ENCODE measurements at regions of chr18 and their contacts with region 1.

Region 1: DNA sequence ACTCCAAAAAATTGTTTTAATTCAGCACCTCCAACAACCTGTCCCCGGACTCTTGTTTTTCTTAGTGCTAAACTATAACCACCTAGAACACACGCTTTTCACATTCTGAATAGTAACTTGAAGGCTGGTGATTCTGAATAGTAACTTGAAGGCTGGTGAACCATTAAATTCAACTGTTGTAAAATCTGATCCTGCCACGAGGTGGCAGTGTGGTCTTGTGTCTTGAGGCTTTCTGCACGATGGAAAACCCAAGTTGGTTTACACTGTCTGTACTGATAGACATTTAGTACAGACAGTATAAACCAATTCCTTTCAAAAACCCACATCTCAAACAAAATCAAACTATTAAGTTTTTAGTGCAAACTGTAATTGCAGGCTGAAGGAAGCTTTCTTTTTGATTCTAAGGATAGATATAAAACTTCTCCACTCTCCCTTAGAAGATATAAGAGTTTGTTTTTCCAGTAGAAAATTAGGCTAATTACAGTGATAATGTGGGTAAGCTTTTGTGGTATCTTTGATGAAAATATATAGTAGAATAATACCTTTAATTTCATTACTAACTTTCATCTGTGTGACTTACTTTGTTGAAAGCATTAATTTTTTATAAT is 57.6 kb downstream of the VAPA start:
- DNase-seq: no peak
- H3K4me3 ChIP-seq: no peak overlapping the region
- H3K27ac ChIP-seq: no peak overlapping the region
- H3K4me1 ChIP-seq: no peaks in the 10 kb centered on the region
- H3K27me3 ChIP-seq: no peaks in the 10 kb centered on the region
- CTCF ChIP-seq: peak; percentile 85

Region 2: DNA sequence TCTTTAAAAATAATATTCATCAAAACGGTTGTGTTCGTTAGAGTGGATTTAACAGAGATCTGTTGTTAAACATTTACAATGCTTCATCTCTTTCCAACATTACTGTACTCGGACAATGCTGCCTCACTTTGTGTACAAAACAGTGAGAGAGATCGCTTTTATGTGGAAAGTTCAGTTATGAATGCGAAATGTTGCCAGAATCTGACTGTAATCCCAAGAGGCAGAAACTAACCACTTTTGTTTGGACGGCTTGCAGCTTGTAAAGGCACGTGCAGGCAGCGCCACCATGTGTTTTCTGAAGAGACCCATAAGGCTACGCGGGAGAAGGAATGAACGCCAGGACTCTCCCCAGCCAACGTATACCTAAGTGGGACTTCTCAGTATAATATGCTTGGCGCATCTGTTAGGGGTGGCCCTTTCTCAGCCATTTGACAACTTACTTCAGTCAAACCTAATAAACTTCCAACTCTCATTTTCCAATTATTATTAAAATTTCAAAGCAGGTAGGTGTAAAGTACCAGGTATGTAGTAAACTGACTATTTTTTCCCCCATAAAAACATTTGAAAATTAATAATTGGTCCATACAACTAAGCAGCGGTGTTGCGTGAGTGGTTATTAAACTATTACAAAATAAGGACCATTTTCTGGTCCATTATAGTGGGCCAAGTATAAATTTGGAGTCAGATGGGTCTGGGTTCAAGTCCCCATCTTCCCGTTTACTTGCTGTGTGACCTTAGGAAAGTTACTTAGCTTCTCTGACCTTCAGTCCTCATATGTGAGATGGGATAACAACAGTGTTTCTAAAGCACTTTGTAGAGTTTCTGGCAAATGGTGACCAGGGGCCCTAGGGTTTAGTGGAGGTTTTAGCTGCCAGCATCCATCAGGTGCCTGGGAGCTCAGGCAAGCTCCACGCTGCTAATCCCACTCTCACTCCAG is 548.9 kb after region 1 on chr18:
- intact Hi-C with region 1: loop called (anchors 2 kb)
- DNase-seq: peak; percentile 79
- H3K4me3 ChIP-seq: no peak overlapping the region
- H3K27ac ChIP-seq: peak overlapping the region; percentile 74
- H3K4me1 ChIP-seq: peaks cover 27% of the 10 kb centered on the region
- H3K27me3 ChIP-seq: no peaks in the 10 kb centered on the region
- CTCF ChIP-seq: peak; percentile 90

Measured in left ventricle myocardium inferior (tissue), 1 donor.